PC-9 (cell line): ENCODE measurements at regions of chr12 and their contacts with region 1.

Region 1: DNA sequence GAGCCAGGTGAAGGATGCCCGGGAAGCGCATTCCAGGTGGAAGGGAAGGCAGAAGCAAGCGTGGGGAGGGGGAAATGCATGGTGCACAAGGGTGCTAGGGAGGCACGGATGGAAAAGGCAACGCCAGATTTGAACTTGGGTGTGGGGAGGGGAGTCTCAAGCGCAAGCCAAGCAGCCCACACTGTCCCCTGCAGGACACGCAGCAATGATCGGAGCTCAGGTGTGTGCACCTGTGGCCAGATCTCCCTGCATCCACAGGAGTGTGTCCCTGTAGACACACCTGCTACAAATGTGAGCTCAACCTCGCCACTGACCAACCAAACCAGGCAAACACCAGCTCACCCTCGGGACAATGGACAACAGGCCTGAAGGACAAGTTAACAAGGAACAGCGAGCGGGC is 63.2 kb downstream of the SCARB1 start:
- DNase-seq: no peak
- H3K4me3 ChIP-seq: no peak overlapping the region
- H3K27ac ChIP-seq: no peak overlapping the region
- H3K4me1 ChIP-seq: peaks cover 7% of the 10 kb centered on the region; the same call in 1 of the 2 replicates
- H3K27me3 ChIP-seq: no peaks in the 10 kb centered on the region
- CTCF ChIP-seq: no peak

Region 2: DNA sequence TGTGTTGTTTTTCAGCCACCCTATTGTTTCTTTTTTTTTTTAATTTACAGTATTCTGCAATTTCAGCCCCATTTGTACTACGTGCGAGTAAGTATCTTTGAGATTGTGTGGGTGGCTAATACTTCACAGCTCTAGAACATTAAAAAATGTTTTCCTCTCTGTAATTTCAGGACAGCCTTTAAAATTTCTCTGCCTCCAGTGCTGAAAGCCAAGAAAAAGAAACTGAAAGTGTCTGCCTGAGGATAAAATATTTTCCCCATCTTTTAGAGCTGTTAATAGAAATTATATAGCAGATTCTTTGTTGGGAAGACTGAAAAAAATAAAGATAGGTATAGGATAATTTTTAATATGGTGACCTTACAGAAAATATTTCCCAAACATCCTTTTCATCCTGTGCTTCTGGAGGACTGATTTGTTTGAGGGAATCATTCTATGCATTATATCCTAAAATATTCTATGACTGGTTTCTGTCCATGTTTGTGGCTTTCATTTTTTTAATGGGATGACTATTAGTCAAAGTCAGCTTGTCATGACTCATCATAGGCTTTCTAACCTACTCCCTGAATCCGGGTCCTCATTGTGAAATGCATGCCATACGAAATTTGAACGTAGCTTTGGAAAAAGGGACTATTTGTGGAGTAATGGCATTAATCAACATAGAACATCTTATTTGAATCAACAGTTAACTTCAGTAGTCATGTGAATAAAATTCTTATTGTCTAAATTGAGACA is 1140.3 kb before region 1 on chr12:
- CTCF ChIA-PET with region 1: no interaction called
- POLR2A ChIA-PET with region 1: interaction called, 10 read pairs
- intact Hi-C with region 1: no loop called
- DNase-seq: peak in 1 of 2 experiments; percentile 74
- H3K4me3 ChIP-seq: no peak overlapping the region
- H3K27ac ChIP-seq: peak overlapping the region; percentile 79
- H3K4me1 ChIP-seq: peaks cover 23% of the 10 kb centered on the region
- H3K27me3 ChIP-seq: no peaks in the 10 kb centered on the region
- CTCF ChIP-seq: no peak